ENCODE measurements at regions of chr5 and their contacts with region 1.

Region 1: GRCh38 chr5:112921833-112922817 is at the start of gene REEP5:
- DNase-seq: peak; percentile 83 to 87 (median 85)
- H3K4me3 ChIP-seq: peak within 1 kb of the TSS; percentile 53 to 78
- H3K4me3 Mint-ChIP-seq: peak within 1 kb of the TSS; percentile 91 to 98 (median 93)
- H3K27ac ChIP-seq: peak within 1 kb of the TSS; percentile 84
- H3K27ac Mint-ChIP-seq: peak within 1 kb of the TSS; percentile 86 to 97 (median 96)
- H3K4me1 ChIP-seq: peaks cover 69% of the 10 kb centered on the region
- H3K4me1 Mint-ChIP-seq: peaks cover 49 to 77% (median 57%) of the 10 kb centered on the region in 4 donors
- H3K27me3 ChIP-seq: no peaks in the 10 kb centered on the region
- H3K27me3 Mint-ChIP-seq: no peaks in the 10 kb centered on the region
- total RNA-seq, gene REEP5: 55.6 to 61.1 TPM

Region 2: DNA sequence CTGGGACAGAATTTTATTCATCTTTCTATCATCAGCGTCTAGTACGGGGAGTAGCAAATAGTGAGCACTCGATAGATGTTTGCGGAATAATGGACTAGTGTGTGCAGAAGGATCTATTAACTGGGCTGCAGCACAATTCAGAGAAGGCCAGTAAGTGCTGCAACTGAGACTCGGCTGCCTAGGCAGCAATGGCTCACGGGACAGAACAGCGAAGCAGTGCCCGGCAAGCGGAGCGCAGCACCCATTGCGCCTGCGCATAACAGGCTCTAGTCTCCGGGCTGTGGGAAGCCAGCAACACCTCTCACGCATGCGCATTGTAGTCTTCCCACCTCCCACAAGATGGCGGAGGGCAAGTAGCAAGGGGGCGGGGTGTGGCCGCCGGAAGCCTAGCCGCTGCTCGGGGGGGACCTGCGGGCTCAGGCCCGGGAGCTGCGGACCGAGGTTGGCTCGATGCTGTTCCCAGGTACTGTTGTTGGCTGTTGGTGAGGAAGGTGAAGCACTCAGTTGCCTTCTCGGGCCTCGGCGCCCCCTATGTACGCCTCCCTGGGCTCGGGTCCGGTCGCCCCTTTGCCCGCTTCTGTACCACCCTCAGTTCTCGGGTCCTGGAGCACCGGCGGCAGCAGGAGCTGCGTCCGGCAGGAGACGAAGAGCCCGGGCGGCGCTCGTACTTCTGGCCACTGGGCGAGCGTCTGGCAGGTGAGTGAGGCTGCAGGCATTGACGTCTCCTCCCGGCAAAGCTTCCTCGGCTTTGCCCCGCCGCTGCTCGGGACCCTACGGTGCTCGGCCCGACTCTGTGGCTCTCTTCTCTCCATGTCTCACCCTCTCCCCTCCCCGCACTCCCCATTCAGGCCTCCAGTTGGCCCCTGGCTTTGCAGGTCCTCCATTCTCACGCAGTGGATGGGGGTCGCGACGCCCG is 214.7 kb before region 1 on chr5:
- CTCF ChIA-PET with region 1: interaction called, 4 read pairs
- POLR2A ChIA-PET with region 1: interaction called, 7 read pairs
- intact Hi-C with region 1: loop called (anchors 1 kb)
- DNase-seq: peak; percentile 95 to 99 (median 98)
- H3K4me3 ChIP-seq: peak overlapping the region; percentile 80 to 86
- H3K4me3 Mint-ChIP-seq: peak overlapping the region; percentile 91 to 96 (median 95)
- H3K27ac ChIP-seq: peak overlapping the region; percentile 86
- H3K27ac Mint-ChIP-seq: peak overlapping the region; percentile 89 to 97 (median 93)
- H3K4me1 ChIP-seq: peaks cover 52% of the 10 kb centered on the region
- H3K4me1 Mint-ChIP-seq: peaks cover 41 to 61% (median 48%) of the 10 kb centered on the region in 4 donors
- H3K27me3 ChIP-seq: no peaks in the 10 kb centered on the region
- H3K27me3 Mint-ChIP-seq: no peaks in the 10 kb centered on the region

Region 3: DNA sequence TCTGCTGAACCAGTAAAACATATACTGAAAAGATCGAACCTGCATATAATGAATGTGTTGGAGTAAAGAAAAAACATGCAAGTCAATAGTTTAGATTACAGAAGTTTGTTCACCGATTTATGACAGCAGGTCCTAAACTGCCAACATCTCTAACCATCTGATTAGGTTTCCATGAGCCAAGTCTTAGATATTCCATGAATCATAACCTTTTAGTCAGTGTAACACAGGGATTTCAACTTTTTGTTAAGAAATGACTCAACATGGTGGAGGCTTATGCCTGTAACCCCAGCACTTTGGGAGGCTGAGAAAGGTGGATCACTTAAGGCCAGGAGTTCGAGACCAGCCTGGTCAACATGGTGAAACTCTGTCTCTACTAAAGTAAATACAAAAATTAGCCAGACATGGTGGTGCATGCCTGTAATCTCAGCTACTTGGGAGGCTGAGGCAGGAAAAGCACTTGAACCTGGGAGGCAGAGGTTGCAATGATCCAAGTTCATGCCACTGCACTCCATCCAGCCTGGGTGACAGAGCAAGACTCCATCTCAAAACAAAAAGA is 145.7 kb before region 1 on chr5:
- CTCF ChIA-PET with region 1: no interaction called
- POLR2A ChIA-PET with region 1: no interaction called
- intact Hi-C with region 1: no loop called
- DNase-seq: no peak
- H3K4me3 ChIP-seq: no peak overlapping the region
- H3K4me3 Mint-ChIP-seq: no peak overlapping the region
- H3K27ac ChIP-seq: no peak overlapping the region
- H3K27ac Mint-ChIP-seq: no peak overlapping the region
- H3K4me1 ChIP-seq: no peaks in the 10 kb centered on the region
- H3K4me1 Mint-ChIP-seq: no peaks in the 10 kb centered on the region
- H3K27me3 ChIP-seq: no peaks in the 10 kb centered on the region
- H3K27me3 Mint-ChIP-seq: no peaks in the 10 kb centered on the region

Region 4: DNA sequence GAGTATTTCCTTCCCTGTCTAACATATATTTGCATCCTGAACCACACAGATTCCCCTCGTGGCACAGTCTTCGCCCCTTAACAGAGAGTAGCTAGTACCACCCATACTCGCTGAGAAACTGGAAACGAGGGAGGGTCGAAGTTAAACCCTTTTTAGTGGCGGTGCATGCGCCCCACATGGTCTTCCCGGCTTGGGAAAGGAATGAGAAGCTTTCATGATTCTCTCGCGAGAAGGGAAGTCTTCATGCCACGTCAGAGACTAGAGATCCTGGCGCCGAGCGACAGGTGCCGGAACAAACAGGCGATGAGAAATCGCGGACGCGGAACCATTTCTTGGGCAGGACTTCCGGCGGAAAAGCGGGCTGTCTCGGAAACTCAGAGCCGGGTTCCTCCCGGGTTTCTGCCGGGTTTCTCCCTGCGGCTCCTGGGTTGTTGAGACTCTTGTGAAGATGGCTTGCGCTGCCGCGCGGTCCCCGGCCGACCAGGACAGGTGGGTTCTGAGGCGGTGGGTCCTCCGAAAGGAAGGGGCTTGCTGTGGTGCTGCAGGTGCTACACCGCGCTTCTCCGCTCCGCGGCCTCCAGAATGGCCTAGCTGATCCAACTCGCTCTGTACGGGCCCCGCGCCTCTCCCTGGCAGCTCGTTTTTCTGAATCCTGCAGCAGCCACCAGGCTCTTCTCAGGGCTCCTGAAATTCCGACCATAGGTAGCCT is 61.0 kb before region 1 on chr5 and contains the start of gene SRP19:
- CTCF ChIA-PET with region 1: interaction called, 13 read pairs
- POLR2A ChIA-PET with region 1: interaction called, 33 read pairs
- intact Hi-C with region 1: loop called (anchors 1 kb)
- DNase-seq: peak; percentile 90 to 93 (median 92)
- H3K4me3 ChIP-seq: peak within 1 kb of the TSS; percentile 71 to 95
- H3K4me3 Mint-ChIP-seq: peak within 1 kb of the TSS; percentile 96 to 98 (median 97)
- H3K27ac ChIP-seq: peak within 1 kb of the TSS; percentile 97
- H3K27ac Mint-ChIP-seq: peak within 1 kb of the TSS; percentile 98 to 99 (median 98)
- H3K4me1 ChIP-seq: peaks cover 32% of the 10 kb centered on the region
- H3K4me1 Mint-ChIP-seq: peaks cover 19 to 36% (median 30%) of the 10 kb centered on the region in 4 donors
- H3K27me3 ChIP-seq: no peaks in the 10 kb centered on the region
- H3K27me3 Mint-ChIP-seq: peaks cover 6 to 8% of the 10 kb centered on the region in 2 donors
- total RNA-seq, gene SRP19: 51.4 to 54.4 TPM

Region 5: GRCh38 chr5:112907166-112907631 is 14.9 kb before region 1 on chr5:
- CTCF ChIA-PET with region 1: interaction called, 13 read pairs
- POLR2A ChIA-PET with region 1: interaction called, 12 read pairs
- intact Hi-C with region 1: no loop called
- DNase-seq: no peak
- H3K4me3 ChIP-seq: no peak overlapping the region
- H3K4me3 Mint-ChIP-seq: peak overlapping the region in 1 of 8 donors; percentile 24
- H3K27ac ChIP-seq: no peak overlapping the region
- H3K27ac Mint-ChIP-seq: peak overlapping the region in 6 of 7 donors; percentile 16 to 53 (median 35)
- H3K4me1 ChIP-seq: peaks cover 6% of the 10 kb centered on the region
- H3K4me1 Mint-ChIP-seq: peaks cover 20 to 51% (median 36%) of the 10 kb centered on the region in 4 donors
- H3K27me3 ChIP-seq: no peaks in the 10 kb centered on the region
- H3K27me3 Mint-ChIP-seq: no peaks in the 10 kb centered on the region

Region 6: DNA sequence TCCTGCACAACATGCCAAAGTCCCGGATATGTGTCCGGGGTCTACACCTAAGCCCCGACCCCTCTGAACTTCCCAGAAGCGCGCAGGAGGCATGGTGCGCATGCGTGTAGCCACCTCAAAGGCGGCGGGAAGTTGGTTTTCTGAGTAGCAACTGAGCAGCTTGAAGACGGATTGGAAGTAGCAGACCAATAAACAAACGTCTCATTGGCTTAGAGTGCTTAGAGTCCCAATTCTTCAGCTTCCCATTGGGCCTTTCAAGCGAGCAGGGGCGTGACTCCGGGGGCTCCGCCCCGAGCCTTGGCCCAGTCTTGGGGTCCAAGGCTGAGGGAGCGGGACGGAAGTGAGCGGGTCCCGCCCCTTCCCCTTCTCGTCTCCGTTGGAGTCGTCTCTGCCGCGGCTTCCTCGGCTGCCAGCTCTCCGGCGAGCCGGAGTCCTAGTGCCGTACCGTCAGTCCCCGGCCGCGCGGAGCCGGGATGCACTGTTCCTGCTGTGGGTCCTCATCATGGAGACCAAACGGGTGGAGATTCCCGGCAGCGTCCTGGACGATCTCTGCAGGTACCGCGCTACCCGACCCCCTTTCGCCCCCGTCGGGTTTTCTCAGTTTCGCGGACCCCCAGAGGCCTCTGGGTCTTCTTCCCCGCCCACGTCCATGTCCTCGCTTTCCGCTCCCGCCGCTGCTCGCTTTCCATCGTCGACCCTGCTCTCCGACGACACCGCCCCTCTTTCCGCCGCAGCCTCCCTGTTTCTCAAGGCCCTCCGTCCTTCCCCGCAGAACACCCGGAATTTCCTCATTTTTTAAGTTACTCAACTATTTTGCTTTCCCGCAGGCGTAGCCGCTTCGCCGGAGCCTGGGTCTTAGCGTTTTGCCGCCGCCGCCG is 54.5 kb after region 1 on chr5 and contains the start of gene DCP2:
- CTCF ChIA-PET with region 1: interaction called, 21 read pairs
- POLR2A ChIA-PET with region 1: interaction called, 53 read pairs
- intact Hi-C with region 1: loop called (anchors 2 kb)
- DNase-seq: peak; percentile 95 to 97 (median 97)
- H3K4me3 ChIP-seq: peak within 1 kb of the TSS; percentile 77 to 79
- H3K4me3 Mint-ChIP-seq: peak within 1 kb of the TSS; percentile 96 to 100 (median 99)
- H3K27ac ChIP-seq: peak within 1 kb of the TSS; percentile 85
- H3K27ac Mint-ChIP-seq: peak within 1 kb of the TSS; percentile 94 to 98 (median 97)
- H3K4me1 ChIP-seq: peaks cover 45% of the 10 kb centered on the region
- H3K4me1 Mint-ChIP-seq: peaks cover 31 to 63% (median 43%) of the 10 kb centered on the region in 4 donors
- H3K27me3 ChIP-seq: no peaks in the 10 kb centered on the region
- H3K27me3 Mint-ChIP-seq: peaks cover 0 to 4% of the 10 kb centered on the region in 2 donors
- total RNA-seq, gene DCP2: 116 to 123 TPM

Measured in CD4-positive, alpha-beta memory T cell (primary cell).